HepG2 (cell line): ENCODE measurements at regions of chr11 and their contacts with region 1.

Region 1: GRCh38 chr11:65290448-65291165 is 24.1 kb upstream of the CDC42EP2 start:
- DNase-seq: no peak
- ATAC-seq: no peak
- H3K4me3 ChIP-seq: no peak overlapping the region
- H3K27ac ChIP-seq: peak overlapping the region; percentile 6
- H3K4me1 ChIP-seq: peaks cover 32% of the 10 kb centered on the region
- H3K27me3 ChIP-seq: no peaks in the 10 kb centered on the region
- CTCF ChIP-seq: no peak
- EP300 ChIP-seq: no peak
- POLR2A ChIP-seq: no peak
- RAD21 ChIP-seq: no peak

Region 2: GRCh38 chr11:65301491-65302329 is 11.1 kb after region 1 on chr11:
- CTCF ChIA-PET with region 1: no interaction called
- POLR2A ChIA-PET with region 1: interaction called, 23 read pairs
- in situ Hi-C with region 1: no loop called
- intact Hi-C with region 1: loop called (anchors 1 kb)
- DNase-seq: no peak
- ATAC-seq: peak; percentile 72
- H3K4me3 ChIP-seq: peak overlapping the region in 1 of 3 experiments; percentile 33; a peak in 1 of 6 replicates
- H3K27ac ChIP-seq: no peak overlapping the region
- H3K4me1 ChIP-seq: peaks cover 46% of the 10 kb centered on the region
- H3K27me3 ChIP-seq: no peaks in the 10 kb centered on the region
- CTCF ChIP-seq: peak; percentile 10; the same call in 1 of the 2 replicates
- EP300 ChIP-seq: no peak
- POLR2A ChIP-seq: no peak
- RAD21 ChIP-seq: no peak

Region 3: GRCh38 chr11:65418711-65419459 is 128.3 kb after region 1 on chr11:
- CTCF ChIA-PET with region 1: no interaction called
- POLR2A ChIA-PET with region 1: no interaction called
- in situ Hi-C with region 1: no loop called
- intact Hi-C with region 1: no loop called
- DNase-seq: peak; percentile 99
- ATAC-seq: peak; percentile 52
- H3K4me3 ChIP-seq: peak overlapping the region; percentile 66 to 87 (median 70)
- H3K27ac ChIP-seq: peak overlapping the region; percentile 100
- H3K4me1 ChIP-seq: peaks cover 67% of the 10 kb centered on the region
- H3K27me3 ChIP-seq: no peaks in the 10 kb centered on the region; a peak in 1 of 5 replicates
- CTCF ChIP-seq: no peak
- EP300 ChIP-seq: peak; percentile 14 to 87; a peak in 3 of 4 replicates
- POLR2A ChIP-seq: peak in 1 of 2 experiments; percentile 92; a peak in 2 of 4 replicates
- RAD21 ChIP-seq: peak; percentile 56